ENCODE measurements at regions of chr9 and their contacts with region 1.

Region 1: GRCh38 chr9:83538172-83538889 is at the start of gene FRMD3:
- DNase-seq: peak; percentile 87 to 95 (median 93)
- ATAC-seq: peak; percentile 97 to 98
- H3K4me3 ChIP-seq: peak within 1 kb of the TSS; percentile 30
- H3K27ac ChIP-seq: peak within 1 kb of the TSS; percentile 40
- H3K4me1 ChIP-seq: peaks cover 4% of the 10 kb centered on the region
- H3K27me3 ChIP-seq: no peaks in the 10 kb centered on the region
- total RNA-seq, gene FRMD3: 34.3 to 75.1 (median 60.6) TPM

Region 2: GRCh38 chr9:83081010-83081690 is 457.2 kb before region 1 on chr9:
- intact Hi-C with region 1: no loop called
- DNase-seq: no peak
- ATAC-seq: no peak
- H3K4me3 ChIP-seq: no peak overlapping the region
- H3K27ac ChIP-seq: no peak overlapping the region
- H3K4me1 ChIP-seq: no peaks in the 10 kb centered on the region
- H3K27me3 ChIP-seq: no peaks in the 10 kb centered on the region

Region 3: GRCh38 chr9:83346655-83347420 is 191.5 kb before region 1 on chr9:
- intact Hi-C with region 1: loop called in 1 of 4 experiments (anchors 10 kb)
- DNase-seq: no peak
- ATAC-seq: no peak
- H3K4me3 ChIP-seq: no peak overlapping the region
- H3K27ac ChIP-seq: no peak overlapping the region
- H3K4me1 ChIP-seq: no peaks in the 10 kb centered on the region
- H3K27me3 ChIP-seq: no peaks in the 10 kb centered on the region

Measured in right cardiac atrium (tissue), 5 donors.